Activated T-helper 1 cell treated with anti-CD3 and anti-CD28 coated beads, Interleukin-12 subunit alpha, Interleukin-12 subunit beta, Interleukin-2, Interleukin-4 antibody, amounts not matched to agents 30 ng/mL and 10 ng/mL and 1 ng/mL, durations not matched to agents 14 hours and 24 hours and 36 hours (primary cell): ENCODE measurements at regions of chr10 and their contacts with region 1.

Region 1: DNA sequence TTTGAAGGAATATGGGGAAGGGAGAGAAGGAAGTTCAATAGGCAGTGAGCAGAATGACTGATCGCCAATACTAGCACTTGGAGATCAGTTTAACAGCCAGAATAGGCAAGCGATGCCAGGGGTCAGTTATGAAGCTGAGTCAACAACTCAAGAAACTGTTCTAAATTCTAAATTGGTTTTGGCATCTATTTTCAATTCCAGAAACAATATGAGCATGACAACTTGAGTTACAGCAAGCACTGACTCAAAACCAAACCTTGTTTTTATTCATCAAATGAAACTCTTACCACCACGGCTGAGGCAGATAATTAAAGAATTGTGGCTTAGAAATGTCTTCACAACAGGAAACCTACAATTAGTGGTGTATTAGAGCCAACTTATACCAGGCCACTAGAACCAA is 180.5 kb upstream of the ASAH2 start:
- DNase-seq: no peak
- H3K4me3 Mint-ChIP-seq: peak overlapping the region; percentile 37
- H3K27ac Mint-ChIP-seq: peak overlapping the region; percentile 67
- H3K4me1 Mint-ChIP-seq: peaks cover 35% of the 10 kb centered on the region
- H3K27me3 Mint-ChIP-seq: no peaks in the 10 kb centered on the region

Region 2: DNA sequence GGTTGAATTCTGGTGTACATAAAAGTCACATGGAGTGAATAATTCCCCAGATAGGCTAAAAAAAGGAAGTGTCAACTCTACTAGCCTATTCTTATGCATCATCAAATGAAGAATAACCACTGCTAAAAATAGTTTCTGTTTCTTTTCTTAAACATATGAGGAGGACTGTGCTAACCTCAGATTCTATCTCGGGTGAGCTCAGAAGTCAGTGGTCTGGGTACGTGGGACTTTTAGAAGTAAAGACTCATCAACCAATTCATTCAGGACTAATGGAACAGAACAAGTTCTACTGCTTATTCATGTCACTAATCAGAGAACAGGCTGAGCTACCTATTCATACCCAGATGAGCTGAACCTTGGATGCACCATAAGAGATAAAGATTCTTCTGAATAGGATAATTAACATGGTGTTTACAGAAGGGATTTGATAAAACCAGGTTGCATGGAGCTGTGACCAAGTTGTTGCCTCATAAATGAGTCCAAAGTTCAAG is 171.0 kb before region 1 on chr10:
- intact Hi-C with region 1: loop called (anchors 1 kb)
- DNase-seq: no peak
- H3K4me3 Mint-ChIP-seq: no peak overlapping the region
- H3K27ac Mint-ChIP-seq: peak overlapping the region; percentile 23
- H3K4me1 Mint-ChIP-seq: peaks cover 20% of the 10 kb centered on the region
- H3K27me3 Mint-ChIP-seq: peaks cover 27% of the 10 kb centered on the region

Region 3: DNA sequence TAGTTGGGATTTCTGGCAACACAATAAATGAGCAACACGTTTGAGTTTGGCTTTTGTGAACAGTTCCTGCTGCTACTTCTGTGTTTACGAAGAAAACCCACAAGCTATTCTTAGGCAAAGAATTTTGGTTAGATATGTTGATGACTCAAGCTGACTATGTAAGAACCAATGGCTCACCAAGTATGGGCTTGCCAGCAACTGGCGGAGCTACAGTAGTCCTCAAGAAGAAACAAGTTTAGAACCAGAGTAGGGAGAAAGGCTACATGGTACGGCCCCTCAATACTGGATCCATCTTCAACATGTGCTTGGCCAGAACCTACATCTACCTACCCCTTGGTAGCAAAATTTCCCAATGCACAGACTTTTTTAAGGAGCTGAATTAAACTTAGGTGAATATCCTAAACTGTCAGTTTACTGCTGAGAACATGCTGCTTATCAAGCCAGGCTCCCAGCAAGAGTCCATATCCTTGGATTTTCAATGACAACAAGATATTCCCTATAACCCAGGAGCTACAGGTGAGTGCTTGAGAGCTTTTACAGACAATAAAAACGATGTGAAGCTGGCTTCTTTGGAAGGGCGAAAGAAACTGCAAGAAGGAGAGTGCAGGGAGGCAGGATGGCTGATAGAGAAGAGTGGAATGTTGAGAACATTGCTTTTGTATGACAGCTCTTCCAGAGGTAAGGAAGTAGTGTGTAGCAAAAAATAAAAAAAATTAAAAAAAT is 106.2 kb before region 1 on chr10:
- intact Hi-C with region 1: loop called (anchors 2 kb)
- DNase-seq: peak; percentile 15
- H3K4me3 Mint-ChIP-seq: peak overlapping the region; percentile 79
- H3K27ac Mint-ChIP-seq: peak overlapping the region; percentile 19
- H3K4me1 Mint-ChIP-seq: peaks cover 74% of the 10 kb centered on the region
- H3K27me3 Mint-ChIP-seq: no peaks in the 10 kb centered on the region

Region 4: DNA sequence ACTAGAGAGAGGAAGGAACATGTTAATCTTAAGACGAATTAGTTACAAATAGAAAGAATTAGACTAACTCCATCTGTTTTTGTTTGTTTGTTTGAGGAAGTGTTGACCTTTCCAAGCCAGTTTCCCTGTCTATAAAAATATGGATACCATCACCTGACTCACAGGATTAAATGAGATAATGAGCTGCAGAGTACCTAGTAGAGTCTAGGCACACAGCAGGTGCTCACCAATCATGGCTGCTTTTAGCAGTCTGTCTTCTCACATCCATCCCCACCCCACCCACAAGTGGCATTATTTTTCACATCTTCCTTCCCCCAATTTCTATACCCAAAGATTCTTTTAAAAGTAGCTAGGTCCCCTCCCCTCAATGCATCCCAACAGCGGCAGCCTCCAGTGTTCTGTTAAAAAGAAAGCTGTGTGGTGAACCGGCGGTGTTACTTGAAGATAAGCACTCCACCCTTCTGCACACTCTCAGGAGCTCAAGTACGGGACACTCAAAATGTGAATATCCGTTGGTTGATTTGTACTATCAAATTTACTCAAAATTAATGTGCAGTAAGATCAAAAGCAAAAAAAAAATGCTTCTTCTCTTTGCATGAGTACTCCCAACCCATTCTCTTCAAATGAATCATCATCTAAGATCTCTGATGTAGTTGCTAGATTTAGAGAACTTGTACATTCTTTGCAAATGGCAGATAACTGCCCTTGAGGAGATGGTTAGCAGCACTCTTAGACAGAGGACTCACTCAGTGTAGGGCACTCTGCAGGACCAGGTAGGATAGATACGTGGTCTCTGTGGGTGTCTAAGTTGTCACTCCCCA is 35.1 kb before region 1 on chr10:
- intact Hi-C with region 1: loop called (anchors 1 kb)
- DNase-seq: no peak
- H3K4me3 Mint-ChIP-seq: peak overlapping the region; percentile 71
- H3K27ac Mint-ChIP-seq: peak overlapping the region; percentile 88
- H3K4me1 Mint-ChIP-seq: peaks cover 37% of the 10 kb centered on the region
- H3K27me3 Mint-ChIP-seq: peaks cover 1% of the 10 kb centered on the region

Region 5: GRCh38 chr10:50497757-50498156 is 66.0 kb after region 1 on chr10:
- intact Hi-C with region 1: loop called (anchors 1 kb)
- DNase-seq: no peak
- H3K4me3 Mint-ChIP-seq: peak overlapping the region; percentile 45
- H3K27ac Mint-ChIP-seq: peak overlapping the region; percentile 82
- H3K4me1 Mint-ChIP-seq: peaks cover 54% of the 10 kb centered on the region
- H3K27me3 Mint-ChIP-seq: no peaks in the 10 kb centered on the region